Activated CD8-positive, alpha-beta memory T cell treated with anti-CD3 and anti-CD28 coated beads, Interleukin-2, amount 10 ng/mL, durations not matched to agents 7 days and 5 days (primary cell): ENCODE measurements at regions of chr13 and their contacts with region 1.

Region 1: DNA sequence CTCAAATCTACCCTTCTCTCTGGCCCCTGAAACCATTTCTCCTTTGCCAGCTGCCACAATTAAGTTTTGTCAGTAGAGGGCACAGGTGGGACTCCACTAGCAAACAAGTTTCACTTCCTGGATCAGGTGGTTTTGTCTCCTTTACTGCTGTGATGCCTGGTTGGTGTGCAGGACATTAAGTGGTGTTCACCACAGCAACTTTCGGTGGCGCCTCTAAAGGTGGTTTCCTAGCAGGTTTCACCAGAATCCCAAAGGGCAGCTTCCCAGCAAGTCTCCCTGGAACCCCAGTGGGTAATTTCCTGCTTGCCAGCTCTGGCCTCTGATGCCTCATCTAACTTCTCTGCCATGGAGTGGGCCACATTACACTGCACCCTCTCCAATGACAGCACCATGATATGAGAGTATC is 16.6 kb downstream of the MED4 start:
- DNase-seq: peak; percentile 60
- ATAC-seq: peak; percentile 93
- H3K4me3 Mint-ChIP-seq: no peak overlapping the region
- H3K27ac Mint-ChIP-seq: peak overlapping the region; percentile 69
- H3K4me1 Mint-ChIP-seq: peaks cover 10% of the 10 kb centered on the region
- H3K27me3 Mint-ChIP-seq: no peaks in the 10 kb centered on the region

Region 2: DNA sequence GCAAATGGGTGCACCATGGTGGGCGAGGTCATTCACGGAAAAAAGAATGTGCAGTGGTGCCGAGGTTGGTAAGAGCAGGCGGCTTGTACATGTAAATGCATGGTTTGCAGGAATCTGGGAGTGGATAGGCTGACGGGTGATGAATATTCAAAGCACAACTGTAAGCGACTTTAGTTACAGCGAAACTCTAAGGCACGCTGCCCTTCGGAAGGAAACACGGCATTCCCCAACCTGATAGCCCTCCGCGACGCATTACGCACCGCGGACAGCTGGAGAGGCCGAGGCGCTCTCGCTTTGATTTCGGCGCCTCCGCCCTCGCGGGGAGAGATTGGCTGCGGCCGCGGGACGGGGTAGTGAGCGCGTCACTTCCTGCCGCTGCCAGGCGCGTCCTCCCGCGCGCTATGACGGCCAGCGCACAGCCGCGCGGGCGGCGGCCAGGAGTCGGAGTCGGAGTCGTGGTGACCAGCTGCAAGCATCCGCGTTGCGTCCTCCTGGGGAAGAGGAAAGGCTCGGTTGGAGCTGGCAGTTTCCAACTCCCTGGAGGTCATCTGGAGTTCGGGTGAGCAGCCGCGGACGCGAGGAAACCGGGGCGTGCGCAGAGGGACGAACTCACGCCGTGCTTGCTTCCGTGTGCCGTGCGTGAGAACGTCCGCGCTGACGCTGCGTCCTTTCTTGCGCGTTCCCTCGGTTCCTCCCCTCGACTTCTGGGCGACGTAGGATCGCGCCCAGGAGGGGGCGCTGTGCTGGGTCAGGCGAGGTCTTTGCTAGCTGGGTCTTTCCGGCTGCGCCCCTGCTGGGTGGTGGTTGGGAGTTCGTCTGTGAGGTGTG is 40.7 kb before region 1 on chr13 and contains the start of gene NUDT15:
- CTCF ChIA-PET with region 1: interaction called, 17 read pairs
- DNase-seq: peak; percentile 97
- ATAC-seq: peak; percentile 92
- H3K4me3 Mint-ChIP-seq: peak within 1 kb of the TSS; percentile 96
- H3K27ac Mint-ChIP-seq: peak within 1 kb of the TSS; percentile 95
- H3K4me1 Mint-ChIP-seq: peaks cover 42% of the 10 kb centered on the region
- H3K27me3 Mint-ChIP-seq: no peaks in the 10 kb centered on the region
- total RNA-seq, gene NUDT15: 10.6 to 13.7 TPM